ENCODE measurements at regions of chr16 and their contacts with region 1.

Region 1: GRCh38 chr16:69339289-69340108 is at the starts of genes COG8 and NIP7:
- DNase-seq: peak; percentile 79 to 98 (median 86)
- ATAC-seq: peak; percentile 98
- H3K4me3 ChIP-seq: peak within 1 kb of the TSS; percentile 94
- H3K27ac ChIP-seq: peak within 1 kb of the TSS; percentile 90
- H3K4me1 ChIP-seq: peaks cover 13% of the 10 kb centered on the region in 2 experiments
- H3K27me3 ChIP-seq: no peaks in the 10 kb centered on the region
- CTCF ChIP-seq: peak; percentile 72 to 84 (median 84)
- EP300 ChIP-seq: peak; percentile 65
- POLR2A ChIP-seq: peak; percentile 95
- RAD21 ChIP-seq: peak in 1 of 2 experiments; percentile 8; a peak in 1 of 4 replicates
- polyA plus RNA-seq, gene COG8: 3.7 to 5.7 TPM
- polyA plus RNA-seq, gene NIP7: 72.5 to 78.3 TPM

Region 2: DNA sequence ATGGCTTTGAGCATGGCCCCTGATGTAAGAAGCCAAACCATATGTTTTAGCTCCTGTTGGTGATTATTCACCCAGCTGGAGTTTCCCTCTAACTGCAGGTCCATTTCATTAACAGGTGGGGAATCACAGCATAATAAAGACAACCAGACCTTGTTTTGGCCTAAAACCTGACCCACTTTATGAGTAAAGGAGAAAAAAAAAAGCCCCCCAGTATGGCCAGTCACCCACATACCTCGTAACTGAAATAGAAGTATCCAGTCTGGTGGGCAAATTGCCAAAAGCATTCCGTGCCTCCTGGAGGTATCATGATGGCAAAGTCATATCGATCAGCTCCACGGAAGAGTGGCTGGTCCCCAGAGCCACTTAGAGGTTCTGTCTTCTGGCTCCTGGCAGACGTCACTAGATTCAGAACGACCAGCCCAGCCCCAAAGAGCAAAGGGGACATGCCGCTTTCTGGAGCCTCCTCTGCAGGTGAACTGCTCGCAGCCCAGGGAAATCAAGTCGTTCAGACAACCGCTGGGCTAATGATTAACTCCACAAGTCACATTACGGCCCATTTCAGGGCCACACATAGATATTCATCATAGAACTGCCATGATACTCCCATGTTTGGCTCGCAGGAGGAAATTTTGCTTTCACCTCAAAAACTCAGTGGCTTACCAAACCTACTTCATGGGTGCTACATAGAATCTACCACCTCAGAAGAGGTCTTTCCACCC is 12.0 kb after region 1 on chr16 and contains the start of gene TMED6:
- CTCF ChIA-PET with region 1: no interaction called
- POLR2A ChIA-PET with region 1: interaction called, 11 read pairs
- in situ Hi-C with region 1: no loop called
- intact Hi-C with region 1: no loop called
- DNase-seq: no peak
- ATAC-seq: no peak
- H3K4me3 ChIP-seq: no peak within 1 kb of the TSS
- H3K27ac ChIP-seq: no peak within 1 kb of the TSS
- H3K4me1 ChIP-seq: no peaks in the 10 kb centered on the region; a peak in 1 of 5 replicates
- H3K27me3 ChIP-seq: no peaks in the 10 kb centered on the region
- CTCF ChIP-seq: no peak
- EP300 ChIP-seq: no peak
- POLR2A ChIP-seq: no peak
- RAD21 ChIP-seq: no peak
- polyA plus RNA-seq, gene TMED6: 0.32 to 0.45 TPM

Region 3: GRCh38 chr16:69381231-69381630 is 41.7 kb after region 1 on chr16:
- CTCF ChIA-PET with region 1: no interaction called
- POLR2A ChIA-PET with region 1: interaction called, 5 read pairs
- in situ Hi-C with region 1: no loop called
- intact Hi-C with region 1: loop called (anchors 5 kb)
- DNase-seq: no peak
- ATAC-seq: no peak
- H3K4me3 ChIP-seq: no peak overlapping the region
- H3K27ac ChIP-seq: no peak overlapping the region
- H3K4me1 ChIP-seq: peaks cover 4 to 25% of the 10 kb centered on the region in 2 experiments; a peak in 4 of 5 replicates
- H3K27me3 ChIP-seq: no peaks in the 10 kb centered on the region
- CTCF ChIP-seq: no peak
- EP300 ChIP-seq: no peak
- POLR2A ChIP-seq: no peak
- RAD21 ChIP-seq: no peak

Measured in K562 (cell line).